Activated naive CD4-positive, alpha-beta T cell treated with anti-CD3 and anti-CD28 coated beads for 36 hours (primary cell): ENCODE measurements at regions of chr3 and their contacts with region 1.

Region 1: GRCh38 chr3:39260957-39261356 is 18.9 kb downstream of the CX3CR1 start:
- DNase-seq: peak; percentile 78
- H3K4me3 Mint-ChIP-seq: no peak overlapping the region
- H3K27ac Mint-ChIP-seq: no peak overlapping the region
- H3K4me1 Mint-ChIP-seq: peaks cover 20% of the 10 kb centered on the region
- H3K27me3 Mint-ChIP-seq: peaks cover 8% of the 10 kb centered on the region

Region 2: GRCh38 chr3:39208463-39209055 is 52.4 kb before region 1 on chr3:
- CTCF ChIA-PET with region 1: no interaction called
- intact Hi-C with region 1: loop called (anchors 1 kb)
- DNase-seq: peak; percentile 72
- H3K4me3 Mint-ChIP-seq: no peak overlapping the region
- H3K27ac Mint-ChIP-seq: no peak overlapping the region
- H3K4me1 Mint-ChIP-seq: peaks cover 8% of the 10 kb centered on the region
- H3K27me3 Mint-ChIP-seq: no peaks in the 10 kb centered on the region